ENCODE measurements at regions of chr16 and their contacts with region 1.

Region 1: GRCh38 chr16:19502395-19503131 is 19.3 kb downstream of the GDE1 start:
- DNase-seq: peak; percentile 79
- H3K4me3 Mint-ChIP-seq: no peak overlapping the region
- H3K27ac Mint-ChIP-seq: no peak overlapping the region
- H3K4me1 Mint-ChIP-seq: peaks cover 17% of the 10 kb centered on the region
- H3K27me3 Mint-ChIP-seq: no peaks in the 10 kb centered on the region
- CTCF ChIP-seq: peak; percentile 77

Region 2: GRCh38 chr16:19094541-19095365 is 407.8 kb before region 1 on chr16:
- CTCF ChIA-PET with region 1: interaction called, 10 read pairs
- POLR2A ChIA-PET with region 1: no interaction called
- intact Hi-C with region 1: no loop called
- DNase-seq: peak; percentile 67
- H3K4me3 Mint-ChIP-seq: no peak overlapping the region
- H3K27ac Mint-ChIP-seq: no peak overlapping the region
- H3K4me1 Mint-ChIP-seq: peaks cover 23% of the 10 kb centered on the region
- H3K27me3 Mint-ChIP-seq: no peaks in the 10 kb centered on the region
- CTCF ChIP-seq: no peak

Region 3: GRCh38 chr16:19375561-19376158 is 126.9 kb before region 1 on chr16:
- CTCF ChIA-PET with region 1: interaction called, 13 read pairs
- POLR2A ChIA-PET with region 1: no interaction called
- intact Hi-C with region 1: no loop called
- DNase-seq: peak; percentile 64
- H3K4me3 Mint-ChIP-seq: no peak overlapping the region
- H3K27ac Mint-ChIP-seq: no peak overlapping the region
- H3K4me1 Mint-ChIP-seq: no peaks in the 10 kb centered on the region
- H3K27me3 Mint-ChIP-seq: no peaks in the 10 kb centered on the region
- CTCF ChIP-seq: peak; percentile 90

Region 4: DNA sequence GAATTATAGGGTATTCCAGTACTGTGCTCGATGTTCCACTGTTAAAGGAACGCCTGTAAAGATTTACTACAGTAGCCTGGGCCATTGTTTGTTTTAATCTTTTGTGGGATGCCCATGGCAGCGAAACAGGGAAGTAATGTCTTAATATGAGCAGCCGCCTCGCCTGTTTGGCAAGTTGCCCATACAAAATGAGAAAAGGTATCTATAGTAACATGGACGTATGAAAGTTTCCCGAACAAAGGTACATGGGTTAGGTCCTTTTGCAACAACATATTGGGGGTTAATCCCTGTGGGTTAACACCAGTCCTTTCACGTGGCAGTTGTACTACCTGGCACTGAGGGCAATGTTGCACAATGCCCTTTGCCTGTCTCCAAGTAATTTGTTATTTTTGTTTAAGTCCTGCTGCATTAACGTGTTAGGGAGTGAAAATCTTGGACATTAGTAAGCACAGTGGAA is 106.0 kb before region 1 on chr16:
- CTCF ChIA-PET with region 1: interaction called, 328 read pairs
- POLR2A ChIA-PET with region 1: interaction called, 22 read pairs
- intact Hi-C with region 1: no loop called
- DNase-seq: peak; percentile 95
- H3K4me3 Mint-ChIP-seq: peak overlapping the region; percentile 57
- H3K27ac Mint-ChIP-seq: peak overlapping the region; percentile 97
- H3K4me1 Mint-ChIP-seq: peaks cover 38% of the 10 kb centered on the region
- H3K27me3 Mint-ChIP-seq: no peaks in the 10 kb centered on the region
- CTCF ChIP-seq: no peak

Region 5: GRCh38 chr16:19521471-19522396 is 19.2 kb after region 1 on chr16 and contains the start of gene GDE1:
- CTCF ChIA-PET with region 1: interaction called, 23 read pairs
- POLR2A ChIA-PET with region 1: interaction called, 5 read pairs
- intact Hi-C with region 1: no loop called
- DNase-seq: peak; percentile 90
- H3K4me3 Mint-ChIP-seq: peak within 1 kb of the TSS; percentile 87
- H3K27ac Mint-ChIP-seq: peak within 1 kb of the TSS; percentile 85
- H3K4me1 Mint-ChIP-seq: peaks cover 43% of the 10 kb centered on the region
- H3K27me3 Mint-ChIP-seq: no peaks in the 10 kb centered on the region
- CTCF ChIP-seq: peak; percentile 34
- total RNA-seq, gene GDE1: 44.7 and 44.9 TPM in 2 replicates

Region 6: GRCh38 chr16:19549673-19550072 is 47.1 kb after region 1 on chr16:
- CTCF ChIA-PET with region 1: no interaction called
- POLR2A ChIA-PET with region 1: no interaction called
- intact Hi-C with region 1: no loop called
- DNase-seq: no peak
- H3K4me3 Mint-ChIP-seq: no peak overlapping the region
- H3K27ac Mint-ChIP-seq: no peak overlapping the region
- H3K4me1 Mint-ChIP-seq: no peaks in the 10 kb centered on the region
- H3K27me3 Mint-ChIP-seq: no peaks in the 10 kb centered on the region
- CTCF ChIP-seq: no peak

Region 7: GRCh38 chr16:19567560-19567959 is 65.0 kb after region 1 on chr16:
- CTCF ChIA-PET with region 1: no interaction called
- POLR2A ChIA-PET with region 1: no interaction called
- intact Hi-C with region 1: no loop called
- DNase-seq: no peak
- H3K4me3 Mint-ChIP-seq: no peak overlapping the region
- H3K27ac Mint-ChIP-seq: no peak overlapping the region
- H3K4me1 Mint-ChIP-seq: no peaks in the 10 kb centered on the region
- H3K27me3 Mint-ChIP-seq: no peaks in the 10 kb centered on the region
- CTCF ChIP-seq: no peak

Measured in MCF 10A (cell line).